MCF 10A (cell line): ENCODE measurements at regions of chr19 and their contacts with region 1.

Region 1: DNA sequence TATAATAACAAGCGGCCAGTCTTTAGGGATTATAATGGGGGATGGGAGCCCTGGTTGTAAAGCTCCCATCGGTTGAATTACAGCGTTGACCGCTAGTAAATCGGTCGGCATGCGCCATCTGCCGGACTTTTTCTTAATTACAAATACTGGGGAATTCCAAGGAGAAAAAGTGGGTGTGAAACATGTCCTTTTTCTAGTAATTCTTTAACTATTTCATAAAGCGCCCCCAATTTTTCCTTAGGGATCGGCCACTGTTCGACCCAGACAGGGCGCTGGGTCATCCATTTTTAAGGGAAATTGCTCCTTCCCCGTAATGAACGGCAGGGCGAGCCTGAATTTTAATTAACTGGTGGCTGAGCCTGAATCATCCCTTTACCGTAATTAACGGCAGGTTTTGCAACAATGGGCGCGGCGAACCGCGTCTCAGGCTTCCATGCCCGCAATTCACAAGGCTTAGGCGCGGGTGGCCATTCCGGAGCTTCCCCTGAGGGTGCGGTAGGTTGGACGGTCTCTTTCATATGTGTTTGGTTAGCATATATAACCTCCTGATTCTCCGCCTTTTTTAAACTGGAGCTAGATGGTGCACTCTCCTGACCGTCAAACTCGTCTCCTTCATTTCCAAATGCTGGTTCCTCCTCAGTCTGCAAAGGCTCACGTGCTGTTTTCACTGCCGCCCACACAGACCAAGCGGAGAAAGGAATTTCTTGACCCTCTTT is 30.2 kb upstream of the EVI5L start:
- DNase-seq: peak; percentile 82
- H3K4me3 Mint-ChIP-seq: peak overlapping the region; percentile 22
- H3K27ac Mint-ChIP-seq: no peak overlapping the region
- H3K4me1 Mint-ChIP-seq: no peaks in the 10 kb centered on the region
- H3K27me3 Mint-ChIP-seq: no peaks in the 10 kb centered on the region
- CTCF ChIP-seq: peak; percentile 61

Region 2: DNA sequence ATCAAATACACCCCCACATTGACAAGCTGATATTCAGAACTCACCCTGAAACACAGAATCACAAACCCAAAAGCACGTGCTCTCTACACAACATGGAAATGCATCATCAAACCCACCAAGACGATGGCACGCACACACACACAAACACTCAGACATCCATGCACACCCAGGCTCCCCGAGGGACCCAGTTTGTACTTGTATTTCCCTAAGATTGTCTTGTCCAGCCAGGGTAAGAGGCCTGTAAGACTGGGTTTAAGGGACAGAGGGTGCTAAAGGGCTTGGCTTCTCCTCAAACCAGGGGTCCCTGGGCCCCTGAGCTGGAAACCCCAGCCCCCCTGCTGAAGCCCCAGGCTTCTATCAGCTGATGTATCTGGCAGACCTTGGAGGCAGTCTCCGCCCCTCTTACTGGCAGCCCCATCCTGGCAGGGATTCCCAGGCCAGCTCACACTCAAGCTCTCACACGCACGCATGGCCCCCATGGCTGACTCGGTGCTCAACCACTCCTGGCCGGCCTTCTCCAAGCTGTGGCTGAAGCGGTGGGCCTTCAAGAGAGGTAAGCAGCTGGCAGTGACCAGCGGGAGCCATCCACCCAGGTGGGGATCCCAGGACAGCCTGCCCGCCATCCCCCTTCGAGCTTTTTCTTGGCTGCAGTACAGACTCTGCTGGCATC is 444.5 kb before region 1 on chr19:
- CTCF ChIA-PET with region 1: interaction called, 7 read pairs
- POLR2A ChIA-PET with region 1: no interaction called
- intact Hi-C with region 1: loop called (anchors 2 kb)
- DNase-seq: no peak
- H3K4me3 Mint-ChIP-seq: no peak overlapping the region
- H3K27ac Mint-ChIP-seq: no peak overlapping the region
- H3K4me1 Mint-ChIP-seq: no peaks in the 10 kb centered on the region
- H3K27me3 Mint-ChIP-seq: peaks cover 21% of the 10 kb centered on the region
- CTCF ChIP-seq: no peak

Region 3: GRCh38 chr19:7488736-7489353 is 311.0 kb before region 1 on chr19 and contains the start of gene PEX11G:
- CTCF ChIA-PET with region 1: no interaction called
- POLR2A ChIA-PET with region 1: no interaction called
- intact Hi-C with region 1: no loop called
- DNase-seq: peak; percentile 84
- H3K4me3 Mint-ChIP-seq: peak within 1 kb of the TSS; percentile 76
- H3K27ac Mint-ChIP-seq: peak within 1 kb of the TSS; percentile 87
- H3K4me1 Mint-ChIP-seq: peaks cover 14% of the 10 kb centered on the region
- H3K27me3 Mint-ChIP-seq: no peaks in the 10 kb centered on the region
- CTCF ChIP-seq: no peak
- total RNA-seq, gene PEX11G: 5.5 and 6.4 TPM in 2 replicates

Region 4: DNA sequence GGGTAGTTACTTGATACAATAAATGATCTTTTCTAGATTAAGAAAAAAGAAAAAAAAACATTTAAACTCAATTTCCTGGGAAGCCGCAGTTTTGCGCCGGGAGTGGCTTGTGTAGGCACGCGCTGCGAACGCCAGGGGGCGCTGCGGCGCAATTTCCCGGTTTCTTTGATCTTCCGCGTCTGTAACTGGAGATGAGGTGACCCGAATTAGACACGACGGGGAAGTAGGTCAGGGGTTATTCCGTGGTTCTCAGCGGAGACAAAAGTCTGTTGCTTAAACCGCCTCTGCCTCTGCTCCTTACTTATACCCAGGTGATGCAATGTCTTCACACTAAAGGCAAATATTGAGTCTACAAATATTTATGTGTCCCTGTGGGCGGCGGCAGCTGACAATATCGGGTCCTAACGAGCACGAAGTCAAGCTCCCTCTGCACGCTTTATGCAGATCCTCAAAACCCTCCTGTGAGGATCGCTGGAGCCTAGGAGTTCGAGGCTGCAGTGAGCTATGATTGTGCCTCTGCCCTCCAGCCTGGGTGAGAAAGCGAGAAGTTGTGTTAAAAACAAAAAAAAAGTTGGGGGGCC is 147.6 kb before region 1 on chr19:
- CTCF ChIA-PET with region 1: interaction called, 19 read pairs
- POLR2A ChIA-PET with region 1: interaction called, 6 read pairs
- intact Hi-C with region 1: loop called (anchors 1 kb)
- DNase-seq: peak; percentile 94
- H3K4me3 Mint-ChIP-seq: peak overlapping the region; percentile 66
- H3K27ac Mint-ChIP-seq: no peak overlapping the region
- H3K4me1 Mint-ChIP-seq: peaks cover 6% of the 10 kb centered on the region
- H3K27me3 Mint-ChIP-seq: no peaks in the 10 kb centered on the region
- CTCF ChIP-seq: peak; percentile 91

Region 5: DNA sequence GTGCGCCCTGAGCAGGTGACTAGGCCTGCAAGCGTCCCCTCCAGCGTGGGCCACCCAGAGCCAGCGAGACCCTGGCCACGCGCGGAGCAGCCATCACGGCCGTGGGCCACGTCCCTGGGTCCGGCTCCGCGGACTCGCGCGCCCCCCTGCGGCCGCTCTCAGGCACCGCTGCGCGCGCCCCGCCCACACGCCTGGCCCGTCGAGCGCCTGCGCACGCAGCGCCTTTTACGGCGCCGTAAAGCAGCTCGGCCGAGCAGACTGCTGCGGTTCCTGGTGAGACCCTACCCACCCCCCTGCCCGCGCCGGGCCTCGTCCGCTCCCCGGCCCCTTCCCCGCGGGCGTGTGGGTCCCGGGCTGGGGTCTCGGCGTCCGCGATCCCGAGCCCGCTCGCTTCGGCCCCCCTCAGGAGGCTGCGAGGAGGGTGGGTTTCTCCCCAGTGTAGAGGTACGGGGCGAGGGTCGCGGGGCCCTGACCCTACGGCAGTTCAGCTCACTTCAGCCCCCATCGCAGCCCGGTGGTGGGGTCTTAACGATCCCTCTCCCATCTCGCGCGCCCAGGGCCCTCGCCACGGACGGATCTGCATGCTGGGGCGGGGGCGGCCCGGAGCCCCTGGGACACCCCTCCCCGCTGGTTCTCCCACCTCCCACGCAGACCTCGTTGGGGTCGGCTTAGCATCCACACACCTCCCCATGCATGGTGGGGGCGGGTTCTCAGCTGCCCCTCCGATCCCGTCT is 119.0 kb before region 1 on chr19 and contains the start of gene TRAPPC5:
- CTCF ChIA-PET with region 1: interaction called, 21 read pairs
- POLR2A ChIA-PET with region 1: interaction called, 27 read pairs
- intact Hi-C with region 1: loop called (anchors 1 kb)
- DNase-seq: peak; percentile 74
- H3K4me3 Mint-ChIP-seq: peak within 1 kb of the TSS; percentile 84
- H3K27ac Mint-ChIP-seq: peak within 1 kb of the TSS; percentile 66
- H3K4me1 Mint-ChIP-seq: peaks cover 14% of the 10 kb centered on the region
- H3K27me3 Mint-ChIP-seq: no peaks in the 10 kb centered on the region
- CTCF ChIP-seq: peak; percentile 96
- total RNA-seq, gene TRAPPC5: 123 and 155 TPM in 2 replicates

Region 6: DNA sequence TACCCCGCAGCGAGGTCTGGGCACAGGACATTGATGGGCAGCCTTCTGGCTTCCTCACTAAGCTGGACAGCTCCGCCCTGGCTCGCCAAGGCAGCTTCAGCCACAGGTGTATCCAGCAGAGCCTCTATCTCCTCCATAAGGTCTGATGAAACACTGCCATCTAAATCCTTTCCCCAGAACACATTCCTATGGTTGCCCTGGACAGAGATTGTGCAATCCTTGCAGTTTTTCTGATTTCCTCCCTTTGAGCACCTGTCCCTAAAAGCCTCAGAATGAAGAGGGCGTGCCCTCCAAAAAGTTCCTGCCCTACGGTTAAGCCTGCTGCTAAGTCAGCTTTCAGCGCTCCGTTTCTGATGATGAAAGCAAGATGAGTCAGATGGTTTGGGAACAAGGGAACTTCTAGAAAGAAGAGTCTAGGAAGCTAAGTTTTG is 15.8 kb before region 1 on chr19:
- CTCF ChIA-PET with region 1: interaction called, 18 read pairs
- POLR2A ChIA-PET with region 1: interaction called, 15 read pairs
- intact Hi-C with region 1: no loop called
- DNase-seq: peak; percentile 98
- H3K4me3 Mint-ChIP-seq: no peak overlapping the region
- H3K27ac Mint-ChIP-seq: peak overlapping the region; percentile 17
- H3K4me1 Mint-ChIP-seq: peaks cover 18% of the 10 kb centered on the region
- H3K27me3 Mint-ChIP-seq: no peaks in the 10 kb centered on the region
- CTCF ChIP-seq: no peak

Region 7: DNA sequence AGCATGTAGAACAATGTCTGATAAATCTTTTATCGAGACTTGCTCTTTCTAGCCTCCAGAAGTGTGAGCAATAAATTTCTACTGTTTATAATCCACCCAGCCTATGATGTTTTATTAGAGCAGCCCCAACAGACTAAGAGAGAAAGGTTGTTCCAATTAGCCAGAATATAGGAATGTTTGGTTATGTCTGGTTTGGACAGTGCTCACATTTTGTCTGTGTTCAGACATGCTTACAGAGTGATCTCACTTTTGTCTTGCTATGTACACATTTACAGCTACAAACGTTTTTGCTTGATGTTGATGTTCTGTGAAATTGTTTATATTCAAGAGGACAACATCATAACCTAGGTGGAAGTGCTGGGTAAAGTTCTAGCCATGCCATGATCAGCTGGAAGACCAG is 12.2 kb after region 1 on chr19:
- CTCF ChIA-PET with region 1: interaction called, 11 read pairs
- POLR2A ChIA-PET with region 1: interaction called, 4 read pairs
- intact Hi-C with region 1: no loop called
- DNase-seq: no peak
- H3K4me3 Mint-ChIP-seq: no peak overlapping the region
- H3K27ac Mint-ChIP-seq: no peak overlapping the region
- H3K4me1 Mint-ChIP-seq: no peaks in the 10 kb centered on the region
- H3K27me3 Mint-ChIP-seq: no peaks in the 10 kb centered on the region
- CTCF ChIP-seq: no peak